ENCODE measurements at regions of chr12 and their contacts with region 1.

Region 1: DNA sequence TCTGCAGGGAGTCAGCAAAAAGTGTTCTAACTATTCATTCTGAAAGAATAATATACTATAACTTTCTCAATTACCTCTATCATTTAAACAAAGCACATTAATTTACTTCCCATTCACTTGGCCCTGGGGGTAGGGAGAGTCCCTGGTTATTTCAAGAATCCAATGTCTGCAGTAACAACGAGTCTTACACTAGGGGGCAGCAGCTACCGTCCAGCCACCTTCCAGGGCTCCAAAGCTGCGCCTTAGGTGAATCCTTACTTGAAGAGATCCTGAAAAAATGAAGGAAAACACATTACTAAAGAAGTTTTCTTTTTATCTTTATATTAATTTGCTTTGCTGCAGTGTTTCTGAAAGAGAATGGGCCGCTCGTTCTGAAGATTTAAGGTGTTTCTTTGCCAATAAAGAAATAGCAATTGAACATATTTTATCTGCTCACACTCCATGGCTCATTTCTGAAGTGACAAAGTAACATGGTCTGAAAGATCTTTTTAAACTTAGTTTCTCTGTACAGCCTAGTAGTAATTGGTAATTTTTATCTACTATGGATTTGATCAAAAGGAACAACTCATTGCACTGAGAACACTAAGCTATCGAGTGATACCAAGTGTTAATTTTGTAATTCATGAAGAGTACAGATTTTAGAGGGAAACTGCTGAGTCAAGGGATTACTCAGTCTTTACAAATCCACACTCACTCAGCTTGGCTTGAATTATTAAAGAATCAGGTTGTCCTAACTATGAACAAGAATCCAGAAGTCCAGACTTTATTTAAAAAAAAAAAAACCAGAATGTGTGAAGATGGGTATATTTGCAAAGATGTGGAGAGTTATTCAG is 27.6 kb downstream of the BHLHE41 start:
- DNase-seq: peak; percentile 64
- ATAC-seq: peak; percentile 75
- H3K4me3 Mint-ChIP-seq: no peak overlapping the region
- H3K27ac Mint-ChIP-seq: no peak overlapping the region
- H3K4me1 Mint-ChIP-seq: peaks cover 4% of the 10 kb centered on the region
- H3K27me3 Mint-ChIP-seq: peaks cover 21% of the 10 kb centered on the region

Region 2: GRCh38 chr12:26109343-26109844 is 12.1 kb after region 1 on chr12:
- CTCF ChIA-PET with region 1: interaction called, 10 read pairs
- POLR2A ChIA-PET with region 1: no interaction called
- DNase-seq: no peak
- ATAC-seq: no peak
- H3K4me3 Mint-ChIP-seq: no peak overlapping the region
- H3K27ac Mint-ChIP-seq: no peak overlapping the region
- H3K4me1 Mint-ChIP-seq: peaks cover 4% of the 10 kb centered on the region
- H3K27me3 Mint-ChIP-seq: peaks cover 43% of the 10 kb centered on the region

Region 3: GRCh38 chr12:26119391-26119981 is 22.2 kb after region 1 on chr12:
- CTCF ChIA-PET with region 1: interaction called, 10 read pairs
- POLR2A ChIA-PET with region 1: no interaction called
- DNase-seq: no peak
- ATAC-seq: no peak
- H3K4me3 Mint-ChIP-seq: no peak overlapping the region
- H3K27ac Mint-ChIP-seq: no peak overlapping the region
- H3K4me1 Mint-ChIP-seq: peaks cover 20% of the 10 kb centered on the region
- H3K27me3 Mint-ChIP-seq: peaks cover 70% of the 10 kb centered on the region